Thyroid gland (tissue), 4 donors: ENCODE measurements at regions of chr13 and their contacts with region 1.

Region 1: DNA sequence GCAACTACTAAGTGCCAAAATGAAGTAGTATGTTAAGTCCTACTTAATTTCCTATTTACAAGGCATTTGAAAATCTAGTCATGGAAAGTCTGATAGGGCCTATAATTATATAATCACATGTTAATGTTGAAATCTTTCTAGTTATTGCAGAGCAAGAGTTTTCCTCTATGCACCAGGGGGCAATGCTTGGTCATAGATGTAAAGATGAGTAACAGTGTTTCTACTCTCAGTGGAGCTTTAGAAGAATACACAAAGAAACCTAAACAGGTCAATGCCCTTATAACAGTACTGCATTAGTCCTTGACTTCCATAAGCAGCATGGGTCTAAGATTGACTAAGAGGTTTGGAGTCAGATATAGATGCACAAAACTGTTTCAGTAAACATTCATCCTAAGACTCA is 218.7 kb downstream of the KCTD12 start:
- DNase-seq: no peak
- H3K4me3 ChIP-seq: no peak overlapping the region
- H3K27ac ChIP-seq: no peak overlapping the region
- H3K4me1 ChIP-seq: no peaks in the 10 kb centered on the region
- H3K27me3 ChIP-seq: no peaks in the 10 kb centered on the region
- CTCF ChIP-seq: peak in 3 of 6 experiments; percentile 11 to 19 (median 14)
- POLR2A ChIP-seq: no peak

Region 2: DNA sequence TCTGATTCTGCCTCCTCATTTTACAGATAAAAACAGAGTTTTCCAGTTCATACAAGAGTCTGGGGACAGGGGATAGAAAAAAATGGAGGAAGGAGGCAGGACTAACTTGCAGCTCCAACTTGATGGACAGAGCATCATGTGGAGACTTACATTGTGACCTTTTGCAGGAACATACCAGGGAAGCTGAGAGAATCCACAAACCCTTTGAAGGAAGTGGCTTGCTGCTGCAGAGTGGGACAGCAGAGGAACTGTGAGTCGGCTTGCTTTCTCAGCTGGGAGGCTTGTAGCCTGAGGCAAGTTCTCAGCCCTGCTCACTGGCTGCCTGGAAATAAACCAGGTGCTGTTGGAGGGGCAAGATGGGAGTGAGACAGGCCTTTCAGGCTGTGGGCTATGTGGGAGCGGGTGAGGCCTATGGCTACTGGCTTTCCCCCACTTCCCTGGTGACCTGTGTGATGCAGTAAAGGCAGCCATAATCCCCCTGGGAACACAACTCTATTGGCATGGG is 395.8 kb before region 1 on chr13:
- intact Hi-C with region 1: no loop called
- DNase-seq: no peak
- H3K4me3 ChIP-seq: no peak overlapping the region
- H3K27ac ChIP-seq: no peak overlapping the region
- H3K4me1 ChIP-seq: no peaks in the 10 kb centered on the region
- H3K27me3 ChIP-seq: no peaks in the 10 kb centered on the region
- CTCF ChIP-seq: no peak
- POLR2A ChIP-seq: no peak

Region 3: GRCh38 chr13:76538004-76538403 is 129.5 kb before region 1 on chr13:
- intact Hi-C with region 1: no loop called
- DNase-seq: no peak
- H3K4me3 ChIP-seq: no peak overlapping the region
- H3K27ac ChIP-seq: no peak overlapping the region
- H3K4me1 ChIP-seq: no peaks in the 10 kb centered on the region
- H3K27me3 ChIP-seq: no peaks in the 10 kb centered on the region
- CTCF ChIP-seq: no peak
- POLR2A ChIP-seq: no peak

Region 4: DNA sequence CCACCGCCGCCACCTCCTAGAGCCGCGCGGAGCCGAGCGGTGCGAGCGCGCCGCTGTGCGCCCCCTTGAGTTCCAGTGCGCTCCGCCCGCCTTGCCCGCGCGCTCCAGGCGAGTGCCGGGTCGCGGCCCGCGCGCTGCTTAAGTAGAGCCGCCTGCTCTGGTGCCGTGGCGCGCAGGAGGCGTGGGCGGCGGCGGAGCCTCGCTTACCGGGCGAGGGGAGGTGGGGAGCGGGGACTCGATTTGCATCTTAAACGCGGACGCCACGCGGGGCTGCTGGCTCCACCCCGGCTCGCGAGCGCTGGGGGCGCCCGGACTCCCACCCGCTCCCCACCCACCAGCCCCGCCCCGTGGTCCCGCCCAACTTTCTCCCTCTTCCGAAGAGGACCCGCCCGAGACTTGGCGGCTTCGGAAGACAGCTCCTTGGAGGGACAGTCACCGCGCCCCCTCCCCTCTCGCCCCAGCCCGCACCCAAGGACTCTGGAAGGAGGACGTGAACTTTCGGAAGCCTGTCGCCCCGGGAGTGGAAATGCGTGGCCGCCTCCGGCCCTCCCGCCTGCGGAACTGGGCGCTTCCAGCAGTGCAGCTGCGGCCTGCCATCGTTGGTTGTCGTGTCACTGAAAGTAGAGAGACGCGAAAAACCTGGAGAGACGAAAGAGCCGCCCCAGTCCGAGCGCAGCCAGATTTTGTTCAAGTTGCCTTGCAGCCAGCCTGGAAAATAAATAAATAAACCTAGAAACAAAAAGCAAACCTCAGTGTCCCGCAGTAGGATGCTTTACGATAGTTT is 218.9 kb after region 1 on chr13 and contains the start of gene KCTD12:
- intact Hi-C with region 1: loop called (anchors 10 kb)
- DNase-seq: peak; percentile 83 to 87
- H3K4me3 ChIP-seq: peak within 1 kb of the TSS; percentile 31 to 68 (median 67)
- H3K27ac ChIP-seq: peak within 1 kb of the TSS; percentile 79 to 85 (median 84)
- H3K4me1 ChIP-seq: peaks cover 12 to 16% of the 10 kb centered on the region in 2 donors
- H3K27me3 ChIP-seq: no peaks in the 10 kb centered on the region
- CTCF ChIP-seq: peak in 3 of 6 experiments; percentile 3 to 41 (median 36)
- POLR2A ChIP-seq: peak in 1 of 2 donors; percentile 92
- total RNA-seq, gene KCTD12: 27.9 to 59.3 (median 37.8) TPM